ENCODE measurements at regions of chr1 and their contacts with region 1.

Region 1: DNA sequence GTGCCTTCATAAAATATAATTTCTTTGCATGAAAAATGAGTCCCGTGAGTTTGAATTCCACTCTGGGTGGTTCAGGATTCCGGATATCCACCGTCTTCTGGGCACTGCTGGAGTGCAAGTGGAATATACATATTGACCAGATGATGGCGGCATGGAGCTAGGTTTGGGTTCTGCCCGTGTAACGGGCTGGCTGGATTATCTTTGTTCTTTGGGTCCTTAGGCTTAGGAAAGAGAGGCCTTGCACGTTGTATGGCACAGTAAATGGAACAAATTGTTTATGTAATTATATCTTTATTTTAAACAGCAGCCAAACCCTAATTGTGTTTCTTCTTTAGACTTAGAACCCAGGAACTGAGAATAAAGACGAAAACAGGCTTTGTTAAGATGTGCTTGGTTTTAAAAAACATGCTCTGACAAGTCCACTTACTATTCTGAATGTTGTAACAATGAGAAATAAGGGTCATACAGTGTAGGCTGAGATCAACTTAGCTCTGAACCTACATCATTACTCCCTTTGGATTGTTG is 13.5 kb upstream of the ACBD6 start:
- ATAC-seq: peak; percentile 100
- H3K4me3 ChIP-seq: no peak overlapping the region
- H3K27ac ChIP-seq: peak overlapping the region in 1 of 2 donors; percentile 2
- H3K4me1 ChIP-seq: peaks cover 5 to 9% of the 10 kb centered on the region in 2 donors

Region 2: GRCh38 chr1:179921472-179921871 is 594.5 kb before region 1 on chr1:
- in situ Hi-C with region 1: no loop called
- ATAC-seq: no peak
- H3K4me3 ChIP-seq: no peak overlapping the region
- H3K27ac ChIP-seq: peak overlapping the region in 1 of 2 donors; percentile 0
- H3K4me1 ChIP-seq: peaks cover 0 to 17% of the 10 kb centered on the region in 2 donors

Region 3: DNA sequence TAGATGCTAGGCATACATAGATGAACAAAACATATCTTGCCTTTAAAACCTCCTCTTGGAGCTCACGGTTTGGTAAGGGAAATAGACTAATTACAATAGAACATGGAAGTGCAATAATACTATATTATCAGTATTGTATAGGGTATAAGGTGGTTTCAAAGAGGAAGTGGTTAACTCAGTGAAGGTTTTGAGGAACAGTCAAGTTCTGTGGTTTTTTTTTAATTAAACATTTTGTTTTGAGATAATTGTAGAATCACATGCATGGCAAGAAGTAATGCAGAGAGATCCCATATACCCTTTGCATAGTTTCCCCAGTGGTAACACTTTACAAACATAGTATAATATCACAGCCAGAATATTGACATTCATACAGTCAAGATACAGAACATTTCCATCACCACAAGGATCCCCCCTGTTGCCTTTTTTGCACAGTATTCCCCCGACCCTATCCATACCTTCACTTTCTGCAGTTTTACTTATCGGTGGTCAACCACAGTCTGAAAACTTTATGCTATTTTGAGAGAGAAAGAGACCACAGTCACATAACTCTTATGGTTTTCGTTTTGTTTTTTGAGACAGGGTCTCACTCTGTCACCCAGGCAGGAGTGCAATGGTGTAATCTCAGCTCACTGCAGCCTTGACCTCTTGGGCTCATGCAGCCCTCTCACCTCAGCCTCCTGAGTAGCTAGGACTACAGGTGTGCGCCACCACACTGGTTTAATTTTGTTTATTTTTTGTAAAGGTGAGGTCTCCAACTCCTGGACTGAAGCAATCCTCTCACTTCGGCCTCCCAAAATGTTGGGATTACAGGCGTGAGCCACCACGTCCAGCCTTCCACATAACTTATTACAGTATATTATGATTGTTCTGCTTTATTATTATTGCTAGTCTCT is 336.3 kb after region 1 on chr1:
- in situ Hi-C with region 1: loop called in 6 of 9 experiments (anchors 10 to 25 kb)
- ATAC-seq: no peak
- H3K4me3 ChIP-seq: no peak overlapping the region
- H3K27ac ChIP-seq: no peak overlapping the region
- H3K4me1 ChIP-seq: peaks cover 10 to 11% of the 10 kb centered on the region in 2 donors

Region 4: GRCh38 chr1:180863158-180863775 is 347.3 kb after region 1 on chr1:
- in situ Hi-C with region 1: loop called in 8 of 9 experiments (anchors 10 to 25 kb)
- ATAC-seq: peak in 3 of 8 experiments; percentile 19 to 32 (median 26)
- H3K4me3 ChIP-seq: no peak overlapping the region
- H3K27ac ChIP-seq: no peak overlapping the region
- H3K4me1 ChIP-seq: peaks cover 0 to 4% of the 10 kb centered on the region in 2 donors

Region 5: DNA sequence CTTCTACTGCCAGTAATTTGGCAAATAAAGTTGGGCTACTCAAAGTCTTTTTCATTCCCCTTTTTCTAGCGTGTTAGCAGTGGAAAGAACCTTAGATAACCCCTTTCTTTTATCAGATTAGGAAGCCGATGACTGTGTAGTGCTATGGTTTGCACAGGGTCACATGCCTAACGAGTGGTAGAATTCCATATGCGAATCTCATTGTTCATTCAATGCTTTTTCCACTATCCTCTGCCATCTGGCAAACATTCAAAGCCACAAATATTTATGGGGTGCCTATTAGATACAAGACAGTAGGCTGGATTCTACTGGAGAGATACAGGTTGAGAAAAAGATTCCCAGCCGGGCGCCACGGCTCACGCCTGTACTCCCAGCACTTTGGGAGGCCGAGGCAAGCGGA is 557.7 kb after region 1 on chr1:
- in situ Hi-C with region 1: no loop called
- ATAC-seq: peak in 3 of 8 experiments; percentile 16 to 46 (median 18)
- H3K4me3 ChIP-seq: no peak overlapping the region
- H3K27ac ChIP-seq: no peak overlapping the region
- H3K4me1 ChIP-seq: peaks cover 14 to 20% of the 10 kb centered on the region in 2 donors

Region 6: GRCh38 chr1:181152892-181153633 is 637.1 kb after region 1 on chr1:
- in situ Hi-C with region 1: loop called (anchors 10 to 25 kb)
- ATAC-seq: peak; percentile 48 to 85 (median 66)
- H3K4me3 ChIP-seq: no peak overlapping the region
- H3K27ac ChIP-seq: no peak overlapping the region
- H3K4me1 ChIP-seq: peaks cover 11 to 14% of the 10 kb centered on the region in 2 donors